ENCODE measurements at regions of chr1 and their contacts with region 1.

Region 1: DNA sequence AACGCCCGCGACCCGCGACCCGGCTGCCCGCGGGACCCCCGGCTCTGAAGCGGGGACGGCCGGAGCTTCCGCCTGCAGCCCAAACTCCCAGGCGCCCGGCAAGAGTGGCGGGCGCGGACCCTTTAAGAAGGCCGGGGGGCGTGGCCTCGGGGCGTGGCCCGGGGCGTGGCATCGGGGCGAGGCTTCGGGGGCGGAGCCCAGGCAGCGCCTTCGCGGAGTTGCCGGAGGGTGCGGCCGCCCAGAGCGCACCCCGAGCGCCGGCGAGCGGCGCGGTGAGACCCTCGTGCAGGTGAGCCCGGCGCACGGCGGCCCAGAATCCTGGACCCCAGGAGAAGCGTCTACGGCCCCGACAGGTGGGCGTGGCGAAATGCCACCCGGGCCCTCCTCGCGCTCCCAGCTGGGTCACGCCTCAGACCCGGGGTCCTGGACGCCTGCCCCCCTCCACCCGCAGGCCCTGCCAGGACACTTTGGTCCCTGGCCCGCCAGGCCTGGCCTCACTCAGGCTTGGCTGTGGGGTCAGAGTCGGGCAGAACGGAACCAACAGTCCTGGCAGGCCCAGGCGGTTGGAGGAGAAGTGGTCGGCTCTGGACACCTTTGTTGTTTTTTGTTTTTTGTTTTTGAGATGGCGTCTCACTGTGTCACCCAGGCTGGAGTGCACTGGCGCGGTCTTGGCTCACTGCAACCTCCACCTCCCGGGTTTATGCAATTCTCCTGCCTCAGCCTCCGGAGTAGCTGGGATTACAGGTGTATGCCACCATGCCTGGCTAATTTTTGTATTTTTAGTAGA is 14.4 kb downstream of the RNF223 start:
- DNase-seq: no peak
- ATAC-seq: peak; percentile 77
- H3K4me3 ChIP-seq: peak overlapping the region; percentile 57 to 80
- H3K27ac ChIP-seq: no peak overlapping the region
- H3K4me1 ChIP-seq: peaks cover 20% of the 10 kb centered on the region
- H3K27me3 ChIP-seq: no peaks in the 10 kb centered on the region
- CTCF ChIP-seq: peak; percentile 66

Region 2: GRCh38 chr1:975896-976683 is 83.6 kb before region 1 on chr1:
- CTCF ChIA-PET with region 1: no interaction called
- POLR2A ChIA-PET with region 1: no interaction called
- in situ Hi-C with region 1: no loop called
- intact Hi-C with region 1: no loop called
- DNase-seq: no peak
- ATAC-seq: peak; percentile 94
- H3K4me3 ChIP-seq: peak overlapping the region; percentile 53 to 61
- H3K27ac ChIP-seq: peak overlapping the region; percentile 70; the same call in 1 of the 2 replicates
- H3K4me1 ChIP-seq: peaks cover 4% of the 10 kb centered on the region; the same call in 1 of the 2 replicates
- H3K27me3 ChIP-seq: no peaks in the 10 kb centered on the region
- CTCF ChIP-seq: peak; percentile 94

Region 3: GRCh38 chr1:1013105-1013921 is 46.4 kb before region 1 on chr1 and contains the start of gene ISG15:
- CTCF ChIA-PET with region 1: interaction called, 11 read pairs
- POLR2A ChIA-PET with region 1: no interaction called
- in situ Hi-C with region 1: no loop called
- intact Hi-C with region 1: loop called (anchors 10 kb)
- DNase-seq: peak; percentile 67
- ATAC-seq: peak; percentile 89
- H3K4me3 ChIP-seq: peak within 1 kb of the TSS; percentile 66 to 83
- H3K27ac ChIP-seq: peak within 1 kb of the TSS; percentile 87
- H3K4me1 ChIP-seq: peaks cover 10% of the 10 kb centered on the region
- H3K27me3 ChIP-seq: no peaks in the 10 kb centered on the region
- CTCF ChIP-seq: no peak
- total RNA-seq, gene ISG15: 102 TPM

Region 4: DNA sequence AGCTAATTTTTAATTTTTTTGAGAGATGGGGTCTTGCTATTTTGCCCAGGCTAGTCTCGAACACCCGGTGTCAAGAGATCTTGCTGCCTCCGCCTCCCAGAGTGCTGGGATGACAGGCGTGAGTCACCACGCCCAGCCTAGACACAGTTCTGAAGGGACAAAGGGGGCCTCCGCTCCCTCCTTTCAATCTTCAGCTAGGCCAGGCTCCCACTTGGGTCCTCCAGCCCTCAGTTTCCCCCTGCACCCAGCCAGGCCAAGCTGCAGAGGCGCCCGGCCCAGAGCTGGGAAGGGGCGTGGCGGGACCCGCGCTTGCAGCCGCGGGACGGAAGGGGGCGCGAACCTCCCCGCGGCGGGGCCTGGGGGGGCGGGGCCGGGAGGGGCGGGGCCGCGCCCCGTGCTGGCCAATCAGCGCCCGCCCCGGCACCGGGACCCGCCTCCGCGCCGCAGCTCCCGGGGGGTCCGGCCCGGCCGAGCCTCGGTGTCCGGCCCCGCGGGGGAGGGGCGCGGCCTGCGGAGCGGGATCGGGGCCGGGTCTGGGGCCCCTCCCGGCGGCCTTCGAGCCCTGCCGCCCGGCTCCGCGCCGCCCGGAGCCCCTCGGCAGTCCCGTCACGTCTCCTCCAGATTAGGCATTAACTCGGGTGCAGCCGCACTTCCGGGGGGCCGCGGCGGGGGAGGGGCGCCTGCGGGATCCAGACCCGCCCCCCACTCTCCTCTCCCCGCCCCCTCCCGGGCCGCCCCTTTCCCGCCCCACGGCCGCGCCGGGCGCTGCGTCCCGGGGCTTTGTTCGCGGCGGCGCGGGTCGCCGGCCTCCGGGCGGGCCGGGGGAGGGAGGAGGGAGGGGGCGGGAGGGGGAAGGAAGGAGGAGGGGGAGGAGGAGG is 40.3 kb before region 1 on chr1:
- CTCF ChIA-PET with region 1: interaction called, 11 read pairs
- POLR2A ChIA-PET with region 1: no interaction called
- in situ Hi-C with region 1: no loop called
- intact Hi-C with region 1: loop called (anchors 10 kb)
- DNase-seq: no peak
- ATAC-seq: peak; percentile 82
- H3K4me3 ChIP-seq: peak overlapping the region; percentile 22 to 26; a peak in 2 of 4 replicates
- H3K27ac ChIP-seq: no peak overlapping the region; the same call in 1 of the 2 replicates
- H3K4me1 ChIP-seq: peaks cover 43% of the 10 kb centered on the region
- H3K27me3 ChIP-seq: no peaks in the 10 kb centered on the region
- CTCF ChIP-seq: peak; percentile 88

Region 5: DNA sequence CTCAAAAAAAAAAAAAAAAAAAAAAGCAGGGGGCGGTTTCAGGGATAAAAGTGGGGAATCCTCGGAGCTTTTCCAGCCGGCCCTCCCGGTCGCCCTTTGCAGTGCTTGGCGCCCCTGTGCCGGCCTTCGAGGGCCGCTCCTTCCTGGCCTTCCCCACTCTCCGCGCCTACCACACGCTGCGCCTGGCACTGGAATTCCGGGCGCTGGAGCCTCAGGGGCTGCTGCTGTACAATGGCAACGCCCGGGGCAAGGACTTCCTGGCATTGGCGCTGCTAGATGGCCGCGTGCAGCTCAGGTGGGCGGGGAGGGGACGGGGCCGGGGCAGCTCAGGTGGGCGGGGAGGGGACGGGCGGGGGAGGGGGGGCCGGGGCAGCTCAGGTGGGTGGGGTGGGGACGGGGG is 10.9 kb before region 1 on chr1:
- CTCF ChIA-PET with region 1: no interaction called
- POLR2A ChIA-PET with region 1: no interaction called
- in situ Hi-C with region 1: no loop called
- intact Hi-C with region 1: no loop called
- DNase-seq: no peak
- ATAC-seq: no peak
- H3K4me3 ChIP-seq: no peak overlapping the region
- H3K27ac ChIP-seq: no peak overlapping the region
- H3K4me1 ChIP-seq: no peaks in the 10 kb centered on the region
- H3K27me3 ChIP-seq: no peaks in the 10 kb centered on the region
- CTCF ChIP-seq: no peak

Measured in Panc1 (cell line).